Heart left ventricle (tissue), 16 donors: ENCODE measurements at regions of chr5 and their contacts with region 1.

Region 1: DNA sequence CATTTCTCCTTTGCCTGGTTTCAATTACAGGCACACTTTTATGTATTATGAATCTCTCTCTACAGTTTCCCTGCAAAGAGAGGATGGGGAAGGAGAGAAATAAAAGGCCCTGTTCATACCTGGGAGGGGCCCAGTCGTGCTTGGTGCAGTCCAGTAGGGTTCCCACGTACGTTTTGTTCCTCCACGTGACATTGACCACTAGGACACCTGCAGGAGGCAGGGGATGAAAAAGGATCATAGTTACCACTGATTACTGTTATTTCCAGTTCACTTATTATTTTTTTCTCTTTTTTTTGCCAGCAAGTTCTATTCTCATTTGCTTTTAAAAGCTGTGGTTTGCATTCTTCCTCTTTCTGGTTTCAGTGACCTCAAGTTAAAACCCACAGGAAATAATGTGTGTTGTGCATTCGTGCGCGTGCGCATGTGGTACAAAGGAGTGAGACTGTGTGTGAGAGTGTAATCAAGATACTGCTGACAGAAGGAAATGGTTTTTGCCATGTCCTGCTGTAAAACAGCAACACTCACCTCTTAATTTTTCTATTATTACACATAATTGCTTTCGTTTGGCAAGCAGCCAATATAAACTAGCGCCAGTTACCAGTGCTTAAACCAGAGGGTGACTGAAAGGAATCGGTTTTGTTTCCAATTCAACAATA is 96.8 kb downstream of the ZNF608 start:
- DNase-seq: peak; percentile 76 to 86 (median 77)
- ATAC-seq: peak; percentile 19 to 66 (median 50)
- H3K4me3 ChIP-seq: peak overlapping the region in 8 of 12 donors; percentile 10 to 61 (median 41)
- H3K27ac ChIP-seq: peak overlapping the region; percentile 35 to 92 (median 83)
- H3K4me1 ChIP-seq: peaks cover 7 to 56% (median 46%) of the 10 kb centered on the region in 12 donors
- H3K27me3 ChIP-seq: peaks cover 0 to 57% (median 0%) of the 10 kb centered on the region in 9 donors
- CTCF ChIP-seq: no peak
- POLR2A ChIP-seq: no peak

Region 2: GRCh38 chr5:123665822-123666371 is 983.7 kb before region 1 on chr5:
- intact Hi-C with region 1: loop called in 1 of 10 experiments (anchors 10 kb)
- DNase-seq: no peak
- ATAC-seq: no peak
- H3K4me3 ChIP-seq: no peak overlapping the region
- H3K27ac ChIP-seq: no peak overlapping the region
- H3K4me1 ChIP-seq: peaks cover 0 to 2% (median 0%) of the 10 kb centered on the region in 12 donors
- H3K27me3 ChIP-seq: no peaks in the 10 kb centered on the region
- CTCF ChIP-seq: no peak
- POLR2A ChIP-seq: no peak

Region 3: GRCh38 chr5:123949806-123950340 is 699.7 kb before region 1 on chr5:
- intact Hi-C with region 1: loop called in 1 of 10 experiments (anchors 10 kb)
- DNase-seq: no peak
- ATAC-seq: no peak
- H3K4me3 ChIP-seq: no peak overlapping the region
- H3K27ac ChIP-seq: no peak overlapping the region
- H3K4me1 ChIP-seq: no peaks in the 10 kb centered on the region
- H3K27me3 ChIP-seq: no peaks in the 10 kb centered on the region
- CTCF ChIP-seq: no peak
- POLR2A ChIP-seq: no peak

Region 4: DNA sequence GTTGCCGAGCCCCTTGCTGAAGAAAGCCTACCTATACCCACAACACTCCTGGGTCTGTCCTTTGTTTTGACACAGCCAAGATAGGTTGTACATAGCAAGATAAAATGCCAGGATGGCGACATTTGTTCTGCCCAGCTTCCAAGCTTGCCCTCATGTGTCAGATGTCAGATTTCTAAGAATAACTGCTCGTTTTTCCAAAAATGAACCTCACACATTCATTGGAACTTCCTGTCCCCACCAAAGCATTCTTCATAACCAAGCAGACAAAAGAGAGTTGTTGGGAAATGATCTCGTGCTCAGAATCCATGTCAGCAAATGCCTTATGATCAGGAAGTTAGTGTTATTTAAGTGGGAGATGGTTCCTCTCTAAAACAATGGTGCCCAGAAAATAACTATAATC is 113.3 kb before region 1 on chr5:
- intact Hi-C with region 1: loop called in 2 of 10 experiments (anchors 2 to 5 kb)
- DNase-seq: no peak
- ATAC-seq: peak; percentile 32 to 70 (median 66)
- H3K4me3 ChIP-seq: no peak overlapping the region
- H3K27ac ChIP-seq: peak overlapping the region in 7 of 12 donors; percentile 2 to 60 (median 17)
- H3K4me1 ChIP-seq: peaks cover 0 to 29% (median 15%) of the 10 kb centered on the region in 12 donors
- H3K27me3 ChIP-seq: no peaks in the 10 kb centered on the region
- CTCF ChIP-seq: no peak
- POLR2A ChIP-seq: no peak

Region 5: GRCh38 chr5:124741711-124742496 is 92.3 kb after region 1 on chr5:
- intact Hi-C with region 1: loop called in 9 of 10 experiments (anchors 1 to 5 kb)
- DNase-seq: no peak
- ATAC-seq: no peak
- H3K4me3 ChIP-seq: peak overlapping the region in 7 of 12 donors; percentile 67 to 77 (median 70)
- H3K27ac ChIP-seq: peak overlapping the region in 4 of 12 donors; percentile 35 to 96 (median 91)
- H3K4me1 ChIP-seq: peaks cover 0 to 73% (median 44%) of the 10 kb centered on the region in 12 donors
- H3K27me3 ChIP-seq: peaks cover 0 to 11% (median 0%) of the 10 kb centered on the region in 9 donors
- CTCF ChIP-seq: no peak
- POLR2A ChIP-seq: no peak

Region 6: GRCh38 chr5:124755041-124755964 is 105.7 kb after region 1 on chr5:
- intact Hi-C with region 1: no loop called
- DNase-seq: no peak
- ATAC-seq: no peak
- H3K4me3 ChIP-seq: no peak overlapping the region
- H3K27ac ChIP-seq: no peak overlapping the region
- H3K4me1 ChIP-seq: no peaks in the 10 kb centered on the region
- H3K27me3 ChIP-seq: no peaks in the 10 kb centered on the region
- CTCF ChIP-seq: no peak
- POLR2A ChIP-seq: no peak

Region 7: DNA sequence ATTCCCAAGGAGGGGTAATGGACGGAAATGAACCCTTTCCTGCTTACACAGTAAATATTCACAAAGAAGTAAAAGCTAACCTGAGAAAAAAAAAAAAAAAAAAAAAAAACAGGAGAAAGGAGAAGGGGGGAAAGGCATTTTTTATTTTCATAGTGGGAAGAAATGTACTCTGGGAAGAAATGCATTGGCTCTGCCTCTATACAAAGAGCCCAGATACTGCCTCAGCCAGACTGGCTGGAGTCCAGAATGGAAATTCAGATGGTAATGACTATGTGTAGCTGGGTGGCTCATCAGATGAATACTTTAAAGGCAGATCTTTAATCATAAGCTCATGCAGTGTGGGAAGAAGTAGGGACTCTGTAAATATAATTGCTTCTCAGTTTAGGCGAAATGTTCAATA is 221.7 kb after region 1 on chr5:
- intact Hi-C with region 1: no loop called
- DNase-seq: no peak
- ATAC-seq: no peak
- H3K4me3 ChIP-seq: no peak overlapping the region
- H3K27ac ChIP-seq: no peak overlapping the region
- H3K4me1 ChIP-seq: peaks cover 0 to 36% (median 11%) of the 10 kb centered on the region in 12 donors
- H3K27me3 ChIP-seq: no peaks in the 10 kb centered on the region
- CTCF ChIP-seq: no peak
- POLR2A ChIP-seq: no peak

Region 8: DNA sequence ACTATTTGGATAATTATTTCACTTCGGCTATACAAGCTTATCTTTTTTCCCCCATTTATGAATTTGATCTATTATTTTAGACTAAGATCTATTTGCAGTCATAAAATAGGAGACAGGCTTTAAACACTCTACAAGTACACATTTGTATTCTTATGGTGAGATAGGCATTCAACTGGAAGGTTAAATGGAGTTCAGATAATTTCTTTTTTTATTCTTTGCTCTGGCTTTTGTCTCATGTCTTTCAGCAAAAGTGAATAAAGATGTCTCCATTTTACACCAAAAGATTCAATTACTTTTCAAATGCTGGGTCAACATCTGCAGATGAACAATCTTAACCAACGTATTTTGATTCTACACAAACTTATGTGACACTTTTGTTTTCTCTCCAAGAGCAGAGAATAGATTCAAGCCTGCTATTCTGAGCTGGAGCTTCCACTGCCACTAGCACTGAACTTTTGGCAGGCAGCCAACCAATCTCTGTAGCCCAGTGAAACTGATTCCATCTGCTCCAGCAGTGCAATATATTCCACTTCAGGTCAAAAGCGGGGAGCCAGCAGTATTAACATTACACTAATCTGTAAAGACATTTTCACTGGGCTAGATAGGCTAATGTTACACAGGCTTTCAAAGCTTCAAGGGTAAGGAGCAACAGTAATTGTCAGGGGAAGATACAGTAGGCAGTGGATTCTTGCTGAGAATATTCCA is 548.8 kb after region 1 on chr5:
- intact Hi-C with region 1: loop called in 1 of 10 experiments (anchors 10 kb)
- DNase-seq: peak; percentile 65 to 91 (median 86)
- ATAC-seq: peak in 3 of 4 donors; percentile 68 to 76 (median 69)
- H3K4me3 ChIP-seq: no peak overlapping the region
- H3K27ac ChIP-seq: peak overlapping the region in 9 of 12 donors; percentile 8 to 74 (median 28)
- H3K4me1 ChIP-seq: peaks cover 0 to 35% (median 4%) of the 10 kb centered on the region in 12 donors
- H3K27me3 ChIP-seq: no peaks in the 10 kb centered on the region
- CTCF ChIP-seq: no peak
- POLR2A ChIP-seq: no peak